ENCODE measurements at regions of chr1 and their contacts with region 1.

Region 1: GRCh38 chr1:87084244-87084836 is 169.9 kb downstream of the HS2ST1 start:
- DNase-seq: peak; percentile 41
- H3K4me3 ChIP-seq: no peak overlapping the region
- H3K27ac ChIP-seq: no peak overlapping the region
- H3K4me1 ChIP-seq: no peaks in the 10 kb centered on the region
- H3K27me3 ChIP-seq: no peaks in the 10 kb centered on the region
- CTCF ChIP-seq: no peak
- POLR2A ChIP-seq: no peak

Region 2: DNA sequence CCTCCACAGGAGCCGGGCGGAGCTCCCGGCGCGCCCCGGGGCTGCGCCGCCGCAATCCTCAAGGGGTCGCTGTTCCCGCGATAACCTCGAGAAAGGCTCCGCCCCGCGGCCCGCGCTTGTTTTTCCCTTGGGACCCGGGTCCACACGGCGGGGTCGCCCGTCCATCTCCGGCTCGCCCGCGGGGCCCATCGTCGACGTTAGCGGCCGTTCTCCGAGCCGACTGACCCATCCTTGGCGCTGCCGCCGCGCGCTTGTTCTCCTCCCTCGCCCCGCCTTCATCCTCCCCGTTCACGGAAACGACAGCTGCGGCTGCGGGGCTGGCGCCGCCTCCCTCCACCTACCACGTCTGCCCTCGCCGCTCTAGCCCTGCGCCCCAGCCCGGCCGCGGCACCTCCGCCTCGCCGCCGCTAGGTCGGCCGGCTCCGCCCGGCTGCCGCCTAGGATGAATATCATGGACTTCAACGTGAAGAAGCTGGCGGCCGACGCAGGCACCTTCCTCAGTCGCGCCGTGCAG is 379.8 kb before region 1 on chr1 and contains the start of gene SH3GLB1:
- CTCF ChIA-PET with region 1: interaction called, 7 read pairs
- POLR2A ChIA-PET with region 1: no interaction called
- dilution Hi-C with region 1: no loop called
- intact Hi-C with region 1: loop called (anchors 1 kb)
- DNase-seq: peak; percentile 91
- H3K4me3 ChIP-seq: peak within 1 kb of the TSS; percentile 88 to 96 (median 94)
- H3K27ac ChIP-seq: peak within 1 kb of the TSS; percentile 85
- H3K4me1 ChIP-seq: peaks cover 28% of the 10 kb centered on the region
- H3K27me3 ChIP-seq: no peaks in the 10 kb centered on the region
- CTCF ChIP-seq: peak; percentile 96
- POLR2A ChIP-seq: peak; percentile 78
- total RNA-seq, gene SH3GLB1: 140 and 148 TPM in 2 replicates

Region 3: DNA sequence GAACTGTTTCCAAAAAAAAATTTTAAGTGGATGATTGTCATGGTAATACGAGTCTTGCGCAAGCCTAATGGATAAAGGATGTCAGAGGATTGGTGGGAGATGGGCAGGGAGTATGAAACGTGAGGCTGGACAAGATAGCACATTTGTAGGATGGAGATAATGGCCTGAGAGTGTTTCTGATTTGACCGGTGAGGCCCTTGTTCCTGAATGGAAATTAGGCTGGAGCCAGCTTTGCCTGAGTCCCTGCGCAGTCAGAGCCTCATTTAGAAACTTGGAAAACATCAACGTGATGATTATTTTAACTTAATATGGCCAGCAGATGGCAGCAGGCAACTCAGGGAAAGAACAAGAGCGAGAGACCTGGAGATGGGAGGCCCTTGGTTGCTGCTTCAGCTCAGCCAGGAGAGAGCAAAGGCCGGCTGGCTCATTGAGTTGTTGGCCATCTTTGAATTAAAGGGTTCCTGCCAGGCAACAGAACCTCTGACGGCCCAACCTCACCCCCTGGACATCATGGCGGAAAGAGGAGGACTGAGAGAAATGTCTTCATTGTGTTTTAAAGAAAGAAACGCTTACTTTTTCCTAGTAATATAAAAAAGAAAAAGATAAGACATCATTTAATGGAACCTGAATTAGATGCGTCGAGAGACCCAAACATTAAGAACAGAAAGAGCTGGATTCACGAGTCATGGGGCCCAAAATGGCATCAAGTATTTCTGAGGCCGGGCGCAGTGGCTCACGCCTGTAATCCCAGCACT is 250.7 kb before region 1 on chr1:
- CTCF ChIA-PET with region 1: interaction called, 126 read pairs
- POLR2A ChIA-PET with region 1: no interaction called
- dilution Hi-C with region 1: no loop called
- intact Hi-C with region 1: loop called (anchors 1 kb)
- DNase-seq: peak; percentile 75
- H3K4me3 ChIP-seq: no peak overlapping the region
- H3K27ac ChIP-seq: no peak overlapping the region
- H3K4me1 ChIP-seq: no peaks in the 10 kb centered on the region
- H3K27me3 ChIP-seq: no peaks in the 10 kb centered on the region
- CTCF ChIP-seq: peak; percentile 51 to 52
- POLR2A ChIP-seq: no peak

Region 4: GRCh38 chr1:86933562-86934377 is 150.6 kb before region 1 on chr1:
- CTCF ChIA-PET with region 1: no interaction called
- POLR2A ChIA-PET with region 1: interaction called, 11 read pairs
- dilution Hi-C with region 1: no loop called
- intact Hi-C with region 1: no loop called
- DNase-seq: peak; percentile 6
- H3K4me3 ChIP-seq: no peak overlapping the region
- H3K27ac ChIP-seq: no peak overlapping the region
- H3K4me1 ChIP-seq: peaks cover 7% of the 10 kb centered on the region
- H3K27me3 ChIP-seq: no peaks in the 10 kb centered on the region
- CTCF ChIP-seq: no peak
- POLR2A ChIP-seq: no peak

Region 5: DNA sequence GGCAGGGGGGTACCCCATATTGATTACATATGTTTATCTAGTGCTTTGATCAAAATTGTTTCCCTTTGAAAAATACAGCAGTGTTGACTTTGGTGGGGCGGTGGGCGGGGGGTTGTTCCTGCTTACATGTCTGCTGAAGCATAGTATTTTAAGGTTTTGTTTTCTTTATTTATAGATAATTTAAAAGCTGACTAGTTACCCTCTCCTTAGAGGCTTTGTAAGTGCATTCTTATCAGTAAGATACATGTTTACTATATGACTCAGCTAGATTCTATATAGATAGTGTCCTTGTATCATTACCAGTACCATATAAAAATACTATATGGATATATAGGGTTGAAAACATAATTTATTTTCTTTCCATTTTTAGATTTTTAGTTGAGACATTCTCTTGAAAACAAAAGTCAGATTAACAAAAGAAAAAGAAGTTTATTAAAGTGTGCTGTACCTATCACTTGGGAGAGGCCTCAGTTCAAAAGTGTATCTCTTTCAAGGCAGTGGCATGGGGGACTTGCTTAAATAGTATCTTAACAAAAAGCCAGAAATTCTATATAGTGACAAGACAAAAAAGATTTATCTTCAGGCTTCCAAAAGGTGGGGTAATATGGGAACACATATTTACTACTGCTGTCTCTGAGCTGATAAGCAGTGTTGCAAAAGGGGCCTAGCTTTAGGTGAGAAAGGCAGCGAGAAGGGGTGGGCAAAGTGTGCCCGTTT is 90.9 kb before region 1 on chr1:
- CTCF ChIA-PET with region 1: interaction called, 15 read pairs
- POLR2A ChIA-PET with region 1: no interaction called
- dilution Hi-C with region 1: no loop called
- intact Hi-C with region 1: no loop called
- DNase-seq: peak; percentile 15
- H3K4me3 ChIP-seq: no peak overlapping the region
- H3K27ac ChIP-seq: no peak overlapping the region
- H3K4me1 ChIP-seq: peaks cover 10% of the 10 kb centered on the region
- H3K27me3 ChIP-seq: no peaks in the 10 kb centered on the region
- CTCF ChIP-seq: no peak
- POLR2A ChIP-seq: no peak

Region 6: DNA sequence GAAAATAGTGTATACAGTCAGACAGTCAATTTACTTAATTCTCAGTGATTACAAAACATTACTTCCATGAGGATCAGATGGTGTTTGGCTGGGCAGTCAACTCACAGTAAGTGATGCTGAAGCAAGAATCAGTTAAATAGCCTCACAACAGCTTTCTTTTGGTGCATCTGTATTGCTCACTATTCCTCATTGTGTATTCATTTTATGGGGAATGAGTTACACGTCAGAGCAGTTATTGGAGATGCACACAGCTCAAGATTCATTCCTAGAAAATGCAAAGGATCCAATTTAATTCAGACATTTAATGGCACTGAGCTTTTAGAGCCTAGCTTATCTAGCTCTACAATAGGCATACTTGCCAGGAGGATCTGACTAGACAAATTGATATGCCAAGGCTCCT is 19.4 kb before region 1 on chr1:
- CTCF ChIA-PET with region 1: interaction called, 11 read pairs
- POLR2A ChIA-PET with region 1: no interaction called
- dilution Hi-C with region 1: no loop called
- intact Hi-C with region 1: no loop called
- DNase-seq: no peak
- H3K4me3 ChIP-seq: no peak overlapping the region
- H3K27ac ChIP-seq: no peak overlapping the region
- H3K4me1 ChIP-seq: no peaks in the 10 kb centered on the region
- H3K27me3 ChIP-seq: no peaks in the 10 kb centered on the region
- CTCF ChIP-seq: no peak
- POLR2A ChIP-seq: no peak